ENCODE measurements at regions of chr3 and their contacts with region 1.

Region 1: GRCh38 chr3:172209333-172210321 is 170.2 kb downstream of the FNDC3B start:
- DNase-seq: no peak
- H3K4me3 Mint-ChIP-seq: no peak overlapping the region
- H3K27ac Mint-ChIP-seq: no peak overlapping the region
- H3K4me1 Mint-ChIP-seq: peaks cover 27% of the 10 kb centered on the region
- H3K27me3 Mint-ChIP-seq: no peaks in the 10 kb centered on the region

Region 2: GRCh38 chr3:172087602-172088580 is 121.7 kb before region 1 on chr3:
- intact Hi-C with region 1: loop called (anchors 5 kb)
- DNase-seq: no peak
- H3K4me3 Mint-ChIP-seq: no peak overlapping the region
- H3K27ac Mint-ChIP-seq: peak overlapping the region; percentile 62
- H3K4me1 Mint-ChIP-seq: peaks cover 55% of the 10 kb centered on the region
- H3K27me3 Mint-ChIP-seq: no peaks in the 10 kb centered on the region

Region 3: DNA sequence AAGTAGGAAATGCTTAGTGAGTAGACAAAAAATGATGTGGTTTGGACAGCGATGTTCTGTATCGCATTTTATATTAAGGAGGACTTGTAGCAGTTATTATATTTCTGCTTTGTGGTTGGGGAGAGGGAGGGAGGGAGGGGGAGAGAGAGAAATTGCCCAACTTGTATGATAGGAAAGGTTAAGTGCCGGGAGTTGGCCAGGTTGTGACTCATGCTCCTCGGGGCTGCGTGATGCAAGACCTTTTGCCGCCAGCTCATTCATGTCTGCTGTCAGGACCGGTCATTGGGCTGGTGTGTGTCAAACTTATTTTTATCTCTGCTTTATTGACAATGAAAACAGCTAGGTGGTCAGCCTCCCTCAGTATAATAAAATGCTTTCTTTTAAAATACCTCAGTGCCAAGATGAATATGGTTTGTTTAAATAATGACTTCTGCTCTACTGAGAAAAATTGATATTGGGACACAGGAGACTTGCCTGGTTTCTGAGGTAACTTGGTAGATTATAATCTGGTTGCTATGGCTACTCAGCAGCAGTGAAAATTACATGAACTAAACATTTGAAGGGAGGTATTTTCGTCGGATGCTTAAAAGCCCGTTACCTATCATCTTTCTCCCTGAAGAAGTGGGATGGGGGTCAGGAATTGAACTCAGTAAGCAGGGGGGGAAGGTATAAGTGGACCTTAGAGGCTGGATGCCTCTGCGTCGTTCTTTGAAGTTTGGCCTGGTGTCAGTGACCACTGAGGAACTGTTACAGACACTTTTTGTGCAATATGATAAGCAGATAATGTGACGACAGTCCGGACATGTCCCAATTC is 79.5 kb before region 1 on chr3:
- intact Hi-C with region 1: loop called (anchors 2 kb)
- DNase-seq: peak; percentile 36
- H3K4me3 Mint-ChIP-seq: no peak overlapping the region
- H3K27ac Mint-ChIP-seq: peak overlapping the region; percentile 82
- H3K4me1 Mint-ChIP-seq: peaks cover 60% of the 10 kb centered on the region
- H3K27me3 Mint-ChIP-seq: no peaks in the 10 kb centered on the region

Region 4: GRCh38 chr3:172138795-172139441 is 70.7 kb before region 1 on chr3:
- intact Hi-C with region 1: loop called (anchors 1 kb)
- DNase-seq: no peak
- H3K4me3 Mint-ChIP-seq: no peak overlapping the region
- H3K27ac Mint-ChIP-seq: peak overlapping the region; percentile 91
- H3K4me1 Mint-ChIP-seq: peaks cover 62% of the 10 kb centered on the region
- H3K27me3 Mint-ChIP-seq: no peaks in the 10 kb centered on the region

Region 5: DNA sequence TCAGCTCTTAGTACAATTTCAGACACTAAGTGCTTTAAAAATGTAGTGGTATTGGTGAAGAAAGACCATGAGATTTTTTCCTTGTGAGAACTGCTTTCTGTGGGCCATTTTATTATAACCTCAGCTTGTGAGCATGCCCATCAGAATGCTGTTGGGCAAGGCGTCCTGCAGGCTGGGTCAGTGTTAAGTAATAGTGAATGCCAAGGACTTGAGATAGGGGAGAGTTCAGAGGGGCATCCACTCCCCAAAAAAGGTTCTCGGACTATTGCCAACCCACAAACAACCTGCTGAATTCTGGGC is 50.8 kb after region 1 on chr3:
- intact Hi-C with region 1: loop called (anchors 5 kb)
- DNase-seq: no peak
- H3K4me3 Mint-ChIP-seq: no peak overlapping the region
- H3K27ac Mint-ChIP-seq: peak overlapping the region; percentile 81
- H3K4me1 Mint-ChIP-seq: peaks cover 26% of the 10 kb centered on the region
- H3K27me3 Mint-ChIP-seq: no peaks in the 10 kb centered on the region

Region 6: DNA sequence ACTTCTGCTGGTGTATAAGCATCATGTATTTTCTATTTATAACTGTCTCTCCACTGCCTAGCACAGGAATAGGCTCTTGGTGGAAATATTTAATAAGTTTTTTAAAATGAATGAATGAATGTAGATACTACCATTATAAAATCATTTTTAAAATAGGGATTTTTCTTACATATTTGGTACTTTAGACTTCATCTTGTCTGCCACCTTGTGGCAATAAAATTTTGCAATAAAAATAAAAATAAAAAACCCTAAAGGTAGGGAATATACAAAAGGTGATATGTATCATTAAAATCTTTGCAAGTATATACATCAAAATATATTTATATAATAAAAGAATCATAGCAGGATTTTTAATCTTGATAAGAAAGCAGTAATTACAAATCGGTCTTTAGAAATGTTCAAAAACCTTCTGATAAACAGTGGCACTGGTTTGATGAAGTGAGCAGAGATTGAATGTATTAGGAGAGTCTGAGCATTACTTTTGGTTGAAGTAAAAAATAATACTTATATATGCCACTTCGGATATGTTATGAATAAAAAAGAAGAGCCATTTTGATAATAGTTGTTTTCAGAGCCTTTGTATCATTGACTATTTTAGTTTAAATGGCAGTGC is 836.2 kb after region 1 on chr3:
- intact Hi-C with region 1: no loop called
- DNase-seq: no peak
- H3K4me3 Mint-ChIP-seq: no peak overlapping the region
- H3K27ac Mint-ChIP-seq: no peak overlapping the region
- H3K4me1 Mint-ChIP-seq: no peaks in the 10 kb centered on the region
- H3K27me3 Mint-ChIP-seq: no peaks in the 10 kb centered on the region

Measured in activated T-helper 2 cell treated with anti-CD3 and anti-CD28 coated beads, Interferon-gamma antibody, Interleukin-2, Interleukin-4, amounts not matched to agents 10 μg/mL and 5 μg/mL and 100 μg/mL, durations not matched to agents 14 hours and 24 hours and 36 hours (primary cell).